GM12878 (cell line): ENCODE measurements at regions of chr3 and their contacts with region 1.

Region 1: DNA sequence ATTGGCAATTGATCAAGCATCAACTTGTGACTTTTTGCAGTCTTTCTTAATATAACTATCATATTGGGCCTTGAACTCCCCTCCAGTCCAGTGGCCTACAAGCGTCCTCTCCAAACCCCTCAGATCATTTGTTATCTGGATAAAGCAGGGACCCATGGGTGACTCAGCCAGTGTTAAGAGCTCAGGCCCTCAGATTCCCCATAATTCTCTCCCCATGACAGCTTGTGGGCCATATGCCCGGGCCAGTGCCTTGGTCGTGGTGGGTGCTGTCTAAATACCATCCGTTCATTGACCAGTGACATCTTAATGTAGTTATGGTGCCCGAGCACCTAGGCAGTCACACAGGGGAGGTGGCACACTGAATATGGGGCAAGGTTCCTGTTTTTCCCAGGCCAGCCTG is 18.1 kb downstream of the MCF2L2 start:
- DNase-seq: no peak
- ATAC-seq: no peak
- H3K4me3 ChIP-seq: no peak overlapping the region
- H3K27ac ChIP-seq: no peak overlapping the region
- H3K4me1 ChIP-seq: no peaks in the 10 kb centered on the region
- H3K27me3 ChIP-seq: no peaks in the 10 kb centered on the region
- CTCF ChIP-seq: no peak
- EP300 ChIP-seq: no peak
- POLR2A ChIP-seq: no peak
- RAD21 ChIP-seq: no peak

Region 2: GRCh38 chr3:183349421-183350157 is 60.7 kb before region 1 on chr3:
- CTCF ChIA-PET with region 1: no interaction called
- POLR2A ChIA-PET with region 1: no interaction called
- RAD21 ChIA-PET with region 1: no interaction called
- SMC1A ChIA-PET with region 1: no interaction called
- in situ Hi-C with region 1: no loop called
- intact Hi-C with region 1: no loop called
- DNase-seq: no peak
- ATAC-seq: no peak
- H3K4me3 ChIP-seq: no peak overlapping the region
- H3K27ac ChIP-seq: no peak overlapping the region
- H3K4me1 ChIP-seq: no peaks in the 10 kb centered on the region
- H3K27me3 ChIP-seq: peaks cover 0 to 4% of the 10 kb centered on the region in 2 experiments; a peak in 1 of 4 replicates
- CTCF ChIP-seq: no peak
- EP300 ChIP-seq: no peak
- POLR2A ChIP-seq: no peak
- RAD21 ChIP-seq: no peak

Region 3: GRCh38 chr3:183427196-183427875 is 17.1 kb after region 1 on chr3:
- CTCF ChIA-PET with region 1: no interaction called
- POLR2A ChIA-PET with region 1: no interaction called
- RAD21 ChIA-PET with region 1: no interaction called
- SMC1A ChIA-PET with region 1: interaction called, 18 read pairs
- in situ Hi-C with region 1: no loop called
- intact Hi-C with region 1: no loop called
- DNase-seq: no peak
- ATAC-seq: no peak
- H3K4me3 ChIP-seq: peak overlapping the region; percentile 76; the same call in 1 of the 2 replicates
- H3K27ac ChIP-seq: no peak overlapping the region
- H3K4me1 ChIP-seq: peaks cover 4% of the 10 kb centered on the region
- H3K27me3 ChIP-seq: peaks cover 0 to 11% of the 10 kb centered on the region in 2 experiments; a peak in 3 of 4 replicates
- CTCF ChIP-seq: no peak
- EP300 ChIP-seq: no peak
- POLR2A ChIP-seq: no peak
- RAD21 ChIP-seq: no peak

Region 4: DNA sequence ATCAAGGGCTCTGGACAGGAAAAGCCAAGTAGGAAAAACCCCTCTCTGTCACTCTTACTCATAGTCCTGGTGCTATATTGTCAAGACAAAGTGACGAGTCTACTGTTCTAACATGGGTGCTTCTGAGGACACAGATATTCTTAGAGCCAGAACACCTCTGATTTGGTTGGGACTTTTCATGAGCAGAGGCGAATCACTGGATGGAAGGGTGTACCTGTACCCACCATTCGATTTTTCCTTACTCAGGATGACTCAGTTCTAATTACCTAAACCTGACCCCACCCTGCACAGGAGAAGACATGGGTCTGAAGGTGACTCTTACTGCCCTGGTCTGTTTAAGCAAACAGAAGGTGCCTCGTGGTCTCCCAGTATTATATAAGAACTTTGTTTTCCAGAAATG is 548.9 kb after region 1 on chr3:
- CTCF ChIA-PET with region 1: no interaction called
- POLR2A ChIA-PET with region 1: no interaction called
- RAD21 ChIA-PET with region 1: no interaction called
- SMC1A ChIA-PET with region 1: no interaction called
- in situ Hi-C with region 1: no loop called
- intact Hi-C with region 1: no loop called
- DNase-seq: no peak
- ATAC-seq: no peak
- H3K4me3 ChIP-seq: no peak overlapping the region
- H3K27ac ChIP-seq: no peak overlapping the region
- H3K4me1 ChIP-seq: no peaks in the 10 kb centered on the region
- H3K27me3 ChIP-seq: no peaks in the 10 kb centered on the region
- CTCF ChIP-seq: no peak
- EP300 ChIP-seq: no peak
- POLR2A ChIP-seq: no peak
- RAD21 ChIP-seq: no peak